ENCODE measurements at regions of chr5 and their contacts with region 1.

Region 1: GRCh38 chr5:126776497-126777256 is at the start of gene LMNB1:
- DNase-seq: peak; percentile 90 to 98 (median 94)
- ATAC-seq: peak; percentile 86
- H3K4me3 ChIP-seq: peak within 1 kb of the TSS; percentile 93
- H3K4me3 Mint-ChIP-seq: peak within 1 kb of the TSS; percentile 89 to 97 (median 96)
- H3K27ac ChIP-seq: peak within 1 kb of the TSS; percentile 97
- H3K27ac Mint-ChIP-seq: peak within 1 kb of the TSS; percentile 91 to 99 (median 95)
- H3K4me1 ChIP-seq: peaks cover 18 to 22% of the 10 kb centered on the region in 2 donors
- H3K4me1 Mint-ChIP-seq: peaks cover 6 to 31% (median 25%) of the 10 kb centered on the region in 7 donors
- H3K27me3 ChIP-seq: no peaks in the 10 kb centered on the region
- H3K27me3 Mint-ChIP-seq: no peaks in the 10 kb centered on the region
- total RNA-seq, gene LMNB1: 20.8 to 218 (median 32.6) TPM

Region 2: DNA sequence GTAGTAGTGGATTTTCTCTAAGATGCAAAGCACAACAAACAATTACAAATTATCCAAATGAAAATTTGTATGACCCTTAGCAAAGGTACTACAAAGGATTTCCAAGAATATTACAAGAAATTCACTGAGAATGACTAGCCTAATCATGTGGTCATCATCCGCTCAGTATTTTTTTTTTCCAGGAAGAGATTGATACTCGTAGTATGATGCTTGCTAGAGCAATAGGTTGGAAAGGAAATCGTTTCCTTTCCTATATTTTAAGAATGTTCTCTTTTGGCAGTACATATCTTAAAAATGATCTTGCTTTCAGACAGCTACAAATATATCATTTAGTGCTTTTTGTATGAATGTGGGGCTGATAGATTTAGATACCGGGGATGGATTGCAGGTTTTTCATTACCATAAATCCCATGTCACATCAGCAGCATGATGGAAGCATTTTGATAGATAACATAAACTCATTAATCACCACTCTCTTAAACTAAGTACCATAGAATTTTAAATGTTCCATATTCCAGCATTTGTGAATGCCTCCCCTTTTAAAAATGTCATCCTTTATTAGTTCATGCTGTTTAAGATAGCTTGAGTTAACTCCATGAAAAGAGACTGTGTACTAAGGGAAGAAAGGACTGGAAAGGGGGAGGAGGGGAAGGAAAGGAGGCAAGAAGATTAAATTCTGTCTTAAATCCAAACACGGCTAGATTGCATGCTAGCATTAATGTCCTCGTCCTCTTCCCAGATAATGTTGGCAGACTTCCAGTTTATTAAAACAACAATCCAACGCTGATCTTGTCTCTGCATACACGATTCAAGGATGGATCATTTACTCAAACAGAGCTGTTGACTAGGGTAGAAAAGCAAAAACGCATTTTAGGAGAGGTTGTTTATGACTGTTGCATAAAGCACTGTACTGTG is 1718.5 kb before region 1 on chr5:
- CTCF ChIA-PET with region 1: no interaction called
- POLR2A ChIA-PET with region 1: no interaction called
- intact Hi-C with region 1: no loop called
- DNase-seq: no peak
- ATAC-seq: no peak
- H3K4me3 ChIP-seq: no peak overlapping the region
- H3K4me3 Mint-ChIP-seq: no peak overlapping the region
- H3K27ac ChIP-seq: no peak overlapping the region
- H3K27ac Mint-ChIP-seq: no peak overlapping the region
- H3K4me1 ChIP-seq: no peaks in the 10 kb centered on the region
- H3K4me1 Mint-ChIP-seq: no peaks in the 10 kb centered on the region
- H3K27me3 ChIP-seq: no peaks in the 10 kb centered on the region
- H3K27me3 Mint-ChIP-seq: no peaks in the 10 kb centered on the region

Region 3: GRCh38 chr5:126339215-126339805 is 437.4 kb before region 1 on chr5:
- CTCF ChIA-PET with region 1: interaction called, 3 read pairs
- POLR2A ChIA-PET with region 1: no interaction called
- intact Hi-C with region 1: loop called in 1 of 2 experiments (anchors 2 kb)
- DNase-seq: peak in 7 of 9 donors; percentile 48 to 68 (median 65)
- ATAC-seq: peak; percentile 74
- H3K4me3 ChIP-seq: no peak overlapping the region
- H3K4me3 Mint-ChIP-seq: no peak overlapping the region
- H3K27ac ChIP-seq: no peak overlapping the region
- H3K27ac Mint-ChIP-seq: no peak overlapping the region
- H3K4me1 ChIP-seq: no peaks in the 10 kb centered on the region
- H3K4me1 Mint-ChIP-seq: no peaks in the 10 kb centered on the region
- H3K27me3 ChIP-seq: no peaks in the 10 kb centered on the region
- H3K27me3 Mint-ChIP-seq: peaks cover 9 to 27% (median 20%) of the 10 kb centered on the region in 5 donors

Region 4: GRCh38 chr5:126508962-126509279 is 267.8 kb before region 1 on chr5:
- CTCF ChIA-PET with region 1: no interaction called
- POLR2A ChIA-PET with region 1: interaction called, 3 read pairs
- intact Hi-C with region 1: loop called in 1 of 2 experiments (anchors 5 kb)
- DNase-seq: peak in 6 of 9 donors; percentile 17 to 68 (median 49)
- ATAC-seq: peak; percentile 81
- H3K4me3 ChIP-seq: peak overlapping the region; percentile 11
- H3K4me3 Mint-ChIP-seq: peak overlapping the region; percentile 36 to 91 (median 83)
- H3K27ac ChIP-seq: peak overlapping the region; percentile 64
- H3K27ac Mint-ChIP-seq: peak overlapping the region; percentile 77 to 97 (median 93)
- H3K4me1 ChIP-seq: peaks cover 5 to 39% of the 10 kb centered on the region in 2 donors
- H3K4me1 Mint-ChIP-seq: peaks cover 11 to 75% (median 65%) of the 10 kb centered on the region in 7 donors
- H3K27me3 ChIP-seq: no peaks in the 10 kb centered on the region
- H3K27me3 Mint-ChIP-seq: no peaks in the 10 kb centered on the region

Region 5: DNA sequence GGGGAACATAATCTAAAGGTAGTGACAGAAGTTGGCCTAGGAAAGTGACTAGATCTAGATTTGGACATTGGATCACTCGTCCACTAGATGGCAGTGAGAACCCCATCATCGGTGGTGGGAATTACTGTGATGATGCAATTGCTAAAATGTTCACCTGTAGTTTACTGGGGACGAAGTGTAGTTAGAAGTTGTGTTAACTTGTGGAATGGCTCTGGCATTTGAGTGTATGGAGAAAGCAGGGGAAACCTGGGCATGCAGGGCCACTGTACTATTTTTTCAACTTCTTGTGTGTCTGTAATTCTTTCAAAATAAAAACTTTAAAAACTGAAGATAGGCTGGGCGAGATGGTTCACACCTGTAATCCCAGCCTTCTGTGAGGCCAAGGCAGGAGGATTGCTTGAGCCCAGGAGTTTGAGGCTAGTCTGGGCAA is 100.5 kb before region 1 on chr5:
- CTCF ChIA-PET with region 1: interaction called, 95 read pairs
- POLR2A ChIA-PET with region 1: interaction called, 8 read pairs
- intact Hi-C with region 1: loop called (anchors 1 kb)
- DNase-seq: peak; percentile 10 to 78 (median 68)
- ATAC-seq: peak; percentile 87
- H3K4me3 ChIP-seq: no peak overlapping the region
- H3K4me3 Mint-ChIP-seq: peak overlapping the region in 1 of 10 donors; percentile 43
- H3K27ac ChIP-seq: no peak overlapping the region
- H3K27ac Mint-ChIP-seq: peak overlapping the region in 4 of 9 donors; percentile 0 to 50 (median 1)
- H3K4me1 ChIP-seq: no peaks in the 10 kb centered on the region
- H3K4me1 Mint-ChIP-seq: peaks cover 4 to 19% (median 5%) of the 10 kb centered on the region in 7 donors
- H3K27me3 ChIP-seq: no peaks in the 10 kb centered on the region
- H3K27me3 Mint-ChIP-seq: no peaks in the 10 kb centered on the region

Region 6: GRCh38 chr5:126794157-126794828 is 17.6 kb after region 1 on chr5:
- CTCF ChIA-PET with region 1: interaction called, 5 read pairs
- POLR2A ChIA-PET with region 1: no interaction called
- intact Hi-C with region 1: loop called in 1 of 2 experiments (anchors 2 kb)
- DNase-seq: no peak
- ATAC-seq: no peak
- H3K4me3 ChIP-seq: no peak overlapping the region
- H3K4me3 Mint-ChIP-seq: no peak overlapping the region
- H3K27ac ChIP-seq: no peak overlapping the region
- H3K27ac Mint-ChIP-seq: peak overlapping the region in 2 of 9 donors; percentile 12 to 30
- H3K4me1 ChIP-seq: peaks cover 0 to 6% of the 10 kb centered on the region in 2 donors
- H3K4me1 Mint-ChIP-seq: peaks cover 17 to 68% (median 40%) of the 10 kb centered on the region in 7 donors
- H3K27me3 ChIP-seq: no peaks in the 10 kb centered on the region
- H3K27me3 Mint-ChIP-seq: no peaks in the 10 kb centered on the region

Region 7: GRCh38 chr5:126988021-126988569 is 211.4 kb after region 1 on chr5:
- CTCF ChIA-PET with region 1: no interaction called
- POLR2A ChIA-PET with region 1: no interaction called
- intact Hi-C with region 1: loop called in 1 of 2 experiments (anchors 5 kb)
- DNase-seq: peak in 8 of 9 donors; percentile 30 to 81 (median 72)
- ATAC-seq: peak; percentile 94
- H3K4me3 ChIP-seq: no peak overlapping the region
- H3K4me3 Mint-ChIP-seq: peak overlapping the region; percentile 59 to 85 (median 76)
- H3K27ac ChIP-seq: peak overlapping the region; percentile 74
- H3K27ac Mint-ChIP-seq: peak overlapping the region; percentile 79 to 99 (median 94)
- H3K4me1 ChIP-seq: peaks cover 0 to 23% of the 10 kb centered on the region in 2 donors
- H3K4me1 Mint-ChIP-seq: peaks cover 24 to 78% (median 53%) of the 10 kb centered on the region in 7 donors
- H3K27me3 ChIP-seq: no peaks in the 10 kb centered on the region
- H3K27me3 Mint-ChIP-seq: no peaks in the 10 kb centered on the region

Region 8: GRCh38 chr5:127313847-127314473 is 537.3 kb after region 1 on chr5:
- CTCF ChIA-PET with region 1: no interaction called
- POLR2A ChIA-PET with region 1: no interaction called
- intact Hi-C with region 1: loop called in 1 of 2 experiments (anchors 1 kb)
- DNase-seq: peak; percentile 12 to 68 (median 50)
- ATAC-seq: peak; percentile 81
- H3K4me3 ChIP-seq: no peak overlapping the region
- H3K4me3 Mint-ChIP-seq: peak overlapping the region in 1 of 10 donors; percentile 2
- H3K27ac ChIP-seq: no peak overlapping the region
- H3K27ac Mint-ChIP-seq: no peak overlapping the region
- H3K4me1 ChIP-seq: no peaks in the 10 kb centered on the region
- H3K4me1 Mint-ChIP-seq: peaks cover 0 to 7% (median 0%) of the 10 kb centered on the region in 7 donors
- H3K27me3 ChIP-seq: no peaks in the 10 kb centered on the region
- H3K27me3 Mint-ChIP-seq: peaks cover 0 to 32% (median 4%) of the 10 kb centered on the region in 5 donors